Common myeloid progenitor, CD34-positive (primary cell): ENCODE measurements at regions of chr12 and their contacts with region 1.

Region 1: DNA sequence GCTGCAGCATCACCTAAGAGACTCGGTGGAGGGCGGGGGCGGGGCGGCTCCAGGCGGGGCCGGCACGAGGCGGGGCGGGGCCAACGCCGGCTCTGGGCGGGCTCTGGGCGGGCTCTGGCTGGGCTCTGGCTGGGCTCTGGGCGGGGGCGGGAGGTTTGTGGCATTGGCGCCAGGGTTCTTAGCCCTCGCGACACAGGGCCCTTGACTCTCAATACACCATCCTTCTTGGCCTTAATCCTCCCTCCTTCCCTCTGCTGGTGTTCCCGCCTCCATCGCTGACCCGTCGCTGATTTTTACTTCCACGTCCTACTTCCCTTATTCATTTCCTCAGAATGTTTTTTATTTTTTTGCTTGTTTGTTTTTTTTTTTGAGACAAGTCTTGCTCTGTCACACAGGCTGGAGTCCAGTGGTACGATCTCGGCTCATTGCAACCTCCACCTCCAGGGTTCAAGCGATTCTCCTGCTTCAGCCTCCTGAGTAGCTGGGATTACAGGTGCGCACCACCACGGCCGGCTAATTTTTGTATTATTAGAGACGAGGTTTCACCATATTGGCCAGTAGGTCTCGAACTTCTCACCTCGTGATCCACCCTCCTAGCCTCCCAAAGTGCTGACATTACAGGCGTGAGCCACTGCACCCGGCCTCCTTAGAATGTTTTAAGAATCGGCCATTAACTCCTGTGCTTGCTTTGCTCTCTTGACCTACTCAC is at the start of gene BLTP3B:
- DNase-seq: peak; percentile 82 to 92 (median 88)
- H3K4me3 ChIP-seq: peak within 1 kb of the TSS; percentile 60 to 99 (median 89)
- H3K27ac ChIP-seq: peak within 1 kb of the TSS; percentile 64 to 90
- H3K4me1 ChIP-seq: peaks cover 4 to 36% (median 24%) of the 10 kb centered on the region in 4 experiments
- H3K27me3 ChIP-seq: no peaks in the 10 kb centered on the region

Region 2: GRCh38 chr12:100101000-100101399 is 42.0 kb before region 1 on chr12:
- CTCF ChIA-PET with region 1: no interaction called
- POLR2A ChIA-PET with region 1: no interaction called
- DNase-seq: no peak
- H3K4me3 ChIP-seq: no peak overlapping the region
- H3K27ac ChIP-seq: no peak overlapping the region
- H3K4me1 ChIP-seq: no peaks in the 10 kb centered on the region
- H3K27me3 ChIP-seq: no peaks in the 10 kb centered on the region

Region 3: DNA sequence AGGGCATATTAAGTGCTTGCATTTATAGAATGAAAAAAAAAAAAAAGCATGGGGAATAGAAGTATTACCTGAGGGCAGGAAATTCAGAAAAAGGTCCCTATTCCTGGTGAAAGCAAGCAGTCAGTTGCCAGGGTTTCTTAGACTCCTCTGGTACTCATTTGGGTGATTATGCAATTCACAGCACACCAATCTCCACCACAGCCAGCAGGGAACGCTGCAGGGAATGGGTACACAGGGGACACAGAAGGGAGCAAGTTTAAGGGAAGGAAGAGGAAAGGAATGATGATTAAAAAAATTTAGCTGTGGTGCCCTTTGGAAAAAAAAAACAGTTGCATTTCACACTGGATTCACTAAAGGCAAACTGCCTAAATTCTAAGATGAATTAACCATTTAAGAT is 14.5 kb before region 1 on chr12:
- CTCF ChIA-PET with region 1: interaction called, 11 read pairs
- POLR2A ChIA-PET with region 1: interaction called, 5 read pairs
- DNase-seq: peak; percentile 36 to 56 (median 51)
- H3K4me3 ChIP-seq: peak overlapping the region in 3 of 7 experiments; percentile 34 to 48 (median 46)
- H3K27ac ChIP-seq: peak overlapping the region in 1 of 2 experiments; percentile 59
- H3K4me1 ChIP-seq: peaks cover 13 to 31% (median 20%) of the 10 kb centered on the region in 4 experiments
- H3K27me3 ChIP-seq: no peaks in the 10 kb centered on the region

Region 4: DNA sequence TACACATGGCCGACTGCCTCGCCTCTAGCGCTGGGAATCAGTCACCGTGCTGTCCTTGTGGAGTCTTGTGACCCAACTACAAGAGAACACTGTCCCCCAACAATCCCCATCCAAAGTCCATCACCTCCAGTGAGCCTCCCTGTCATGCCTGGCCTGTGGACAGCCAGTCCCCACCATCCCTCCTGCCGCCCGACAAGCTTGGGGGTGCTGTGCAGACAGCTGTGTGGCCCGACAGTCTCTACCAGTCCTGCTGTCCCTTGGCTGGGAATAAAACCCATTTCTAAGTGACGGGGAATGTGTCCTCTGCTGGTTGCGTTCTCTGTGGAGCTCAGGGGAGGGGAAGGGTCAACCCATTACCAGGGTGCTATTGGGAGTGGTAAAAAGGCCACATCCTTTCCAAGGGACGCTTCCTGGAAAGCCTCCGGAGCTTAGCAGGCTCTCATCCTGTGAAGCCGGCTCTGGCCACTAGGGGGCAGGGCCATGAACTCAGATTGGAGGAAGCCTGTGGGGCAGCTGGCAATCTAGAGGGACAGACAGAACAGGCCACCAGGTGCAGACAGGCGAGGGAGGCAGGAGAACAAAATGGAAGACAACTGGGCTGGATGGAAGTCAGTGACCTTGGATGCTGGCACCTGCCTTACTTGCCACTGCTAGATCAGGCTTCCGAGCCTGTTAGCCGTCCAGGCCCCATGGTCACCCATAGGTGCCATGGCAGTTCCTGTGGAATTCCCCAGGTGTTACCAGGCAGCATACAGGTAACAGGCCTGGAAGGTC is 11.7 kb after region 1 on chr12:
- CTCF ChIA-PET with region 1: interaction called, 25 read pairs
- POLR2A ChIA-PET with region 1: no interaction called
- DNase-seq: peak; percentile 69 to 72 (median 71)
- H3K4me3 ChIP-seq: no peak overlapping the region
- H3K27ac ChIP-seq: no peak overlapping the region
- H3K4me1 ChIP-seq: peaks cover 0 to 2% (median 0%) of the 10 kb centered on the region in 4 experiments
- H3K27me3 ChIP-seq: no peaks in the 10 kb centered on the region